ENCODE measurements at regions of chr2 and their contacts with region 1.

Region 1: DNA sequence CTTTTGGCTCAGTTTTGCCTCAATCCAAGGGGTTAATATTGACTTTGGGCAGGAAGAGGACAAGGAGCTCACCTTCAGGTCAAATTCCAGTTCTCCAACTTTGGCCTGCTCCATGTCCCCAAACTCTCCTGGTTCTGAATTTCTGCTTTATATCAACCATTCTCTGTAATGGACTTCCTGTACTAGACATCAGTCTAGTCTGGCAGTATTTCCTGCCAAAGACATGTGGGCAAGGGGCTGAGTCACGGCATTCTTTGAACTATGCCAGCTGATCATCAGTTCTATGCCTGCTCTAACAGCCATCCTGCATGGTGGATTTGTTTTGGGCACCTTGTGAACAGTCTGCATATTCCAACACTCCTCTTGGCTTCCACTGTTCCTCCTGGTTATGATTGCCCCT is 199.4 kb downstream of the ZEB2 start:
- DNase-seq: peak; percentile 28 to 80
- ATAC-seq: peak; percentile 75 to 87 (median 84)
- H3K4me3 ChIP-seq: no peak overlapping the region
- H3K4me3 Mint-ChIP-seq: peak overlapping the region; percentile 52
- H3K27ac ChIP-seq: peak overlapping the region; percentile 32
- H3K27ac Mint-ChIP-seq: peak overlapping the region; percentile 74 to 90
- H3K4me1 ChIP-seq: peaks cover 9% of the 10 kb centered on the region
- H3K4me1 Mint-ChIP-seq: peaks cover 38 to 48% of the 10 kb centered on the region in 2 donors
- H3K27me3 ChIP-seq: no peaks in the 10 kb centered on the region
- H3K27me3 Mint-ChIP-seq: no peaks in the 10 kb centered on the region
- CTCF ChIP-seq: no peak

Region 2: DNA sequence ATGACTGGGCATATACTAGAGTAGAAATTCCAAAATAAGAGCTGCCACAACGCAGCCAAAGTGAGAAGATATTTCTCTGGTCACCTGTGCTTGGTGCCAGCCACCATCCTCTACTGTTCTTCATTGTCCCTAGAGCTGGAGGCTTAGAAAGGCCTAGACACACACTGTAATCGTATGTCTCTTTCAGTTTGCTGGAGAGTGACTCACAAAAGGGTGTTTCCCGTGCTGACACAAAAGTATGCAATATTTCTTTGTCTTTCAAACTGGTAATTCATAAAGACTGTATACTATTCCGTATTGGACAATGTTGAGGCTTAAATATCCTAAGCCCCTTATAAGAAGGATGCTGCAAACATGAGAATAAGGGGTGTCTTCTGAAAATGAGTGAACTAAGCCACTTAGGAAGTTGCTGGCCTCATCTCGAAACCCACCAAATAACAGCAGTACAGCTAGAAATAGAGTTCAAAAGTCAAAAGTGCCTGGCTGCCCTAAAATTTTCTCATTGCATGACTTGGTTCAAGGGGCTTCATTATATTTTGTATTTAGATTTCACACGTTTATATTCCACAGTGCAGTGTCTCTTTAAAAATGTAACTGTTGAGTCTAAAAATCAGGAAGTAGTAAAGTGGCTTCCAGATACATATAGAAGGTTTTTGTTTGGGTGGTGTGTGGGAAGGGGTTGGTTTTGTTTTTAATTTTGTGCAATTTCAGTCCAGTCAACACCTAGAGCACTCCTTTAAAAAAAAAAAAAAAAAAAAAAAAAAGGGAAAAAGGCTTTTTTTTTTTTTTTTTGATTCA is 590.1 kb before region 1 on chr2:
- intact Hi-C with region 1: no loop called
- DNase-seq: peak in 1 of 2 donors; percentile 39
- ATAC-seq: peak; percentile 47 to 78 (median 75)
- H3K4me3 ChIP-seq: no peak overlapping the region
- H3K4me3 Mint-ChIP-seq: no peak overlapping the region
- H3K27ac ChIP-seq: no peak overlapping the region
- H3K27ac Mint-ChIP-seq: peak overlapping the region; percentile 1 to 23
- H3K4me1 ChIP-seq: no peaks in the 10 kb centered on the region
- H3K4me1 Mint-ChIP-seq: peaks cover 38 to 39% of the 10 kb centered on the region in 2 donors
- H3K27me3 ChIP-seq: no peaks in the 10 kb centered on the region
- H3K27me3 Mint-ChIP-seq: no peaks in the 10 kb centered on the region
- CTCF ChIP-seq: no peak

Region 3: DNA sequence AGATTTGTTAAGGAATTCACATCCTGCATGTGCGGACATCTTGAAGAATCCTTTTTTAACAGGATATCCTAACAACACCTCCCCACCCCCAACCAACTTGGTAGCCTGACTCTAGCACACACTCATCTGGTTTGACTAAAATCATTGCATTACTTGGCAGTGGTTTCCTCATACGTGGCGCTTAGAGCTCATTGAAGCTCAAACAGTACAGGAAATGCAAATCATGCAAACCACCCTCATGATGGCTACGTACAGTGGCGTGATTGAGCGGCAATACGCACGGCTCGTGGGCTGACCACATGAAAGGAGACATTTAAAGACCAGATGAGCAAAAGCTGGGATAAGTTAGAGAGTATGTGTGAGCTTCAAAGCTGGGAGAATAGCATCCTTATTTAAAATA is 136.8 kb before region 1 on chr2:
- intact Hi-C with region 1: loop called (anchors 1 kb)
- DNase-seq: peak; percentile 63 to 92
- ATAC-seq: peak; percentile 96 to 97 (median 96)
- H3K4me3 ChIP-seq: peak overlapping the region; percentile 15
- H3K4me3 Mint-ChIP-seq: peak overlapping the region; percentile 86
- H3K27ac ChIP-seq: peak overlapping the region; percentile 61
- H3K27ac Mint-ChIP-seq: peak overlapping the region; percentile 88 to 90
- H3K4me1 ChIP-seq: no peaks in the 10 kb centered on the region
- H3K4me1 Mint-ChIP-seq: peaks cover 24 to 30% of the 10 kb centered on the region in 2 donors
- H3K27me3 ChIP-seq: no peaks in the 10 kb centered on the region
- H3K27me3 Mint-ChIP-seq: no peaks in the 10 kb centered on the region
- CTCF ChIP-seq: no peak

Region 4: DNA sequence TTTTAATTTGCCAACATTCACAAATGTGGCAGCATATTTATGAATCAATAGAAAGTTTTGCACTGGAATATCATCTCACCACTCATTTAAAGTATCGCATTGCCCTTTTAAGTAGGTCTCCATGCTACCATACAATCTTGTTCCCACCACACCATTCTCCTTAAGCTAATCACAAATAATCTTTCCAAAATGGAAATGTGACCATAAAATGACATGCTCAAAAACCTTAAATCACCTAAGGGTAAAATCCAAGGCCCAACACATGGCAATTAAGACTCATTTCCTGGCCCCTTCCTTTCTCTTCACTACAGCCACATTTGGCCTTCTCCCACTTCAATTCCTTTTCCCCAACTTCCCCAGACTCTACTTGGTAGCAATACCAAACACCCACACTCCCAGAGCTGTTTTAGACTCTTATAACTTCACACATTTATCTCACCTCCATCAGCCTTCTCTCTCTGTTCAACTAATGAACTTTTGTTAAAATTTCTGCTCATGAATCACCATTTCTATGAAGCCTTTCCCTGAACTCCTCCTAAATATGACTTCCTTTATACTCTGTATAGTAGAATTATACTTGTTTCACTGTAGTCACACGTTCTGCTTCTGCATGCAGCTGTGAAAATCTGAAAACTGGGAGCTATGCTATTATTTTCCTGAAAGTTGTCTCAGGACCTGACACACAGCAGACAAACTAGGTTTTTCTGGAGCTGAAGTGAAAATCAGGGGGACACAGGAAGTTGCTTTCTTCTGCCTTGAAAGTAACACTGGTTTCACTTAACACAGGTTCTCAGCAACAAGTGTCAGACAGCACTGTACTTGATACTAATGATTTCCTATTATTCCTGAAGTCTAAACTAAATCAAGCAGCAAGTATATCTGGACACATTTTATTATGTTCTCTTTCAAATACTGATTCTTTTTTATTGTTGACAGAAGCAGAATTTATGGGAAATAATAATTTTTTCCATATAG is 104.5 kb before region 1 on chr2:
- intact Hi-C with region 1: loop called (anchors 10 kb)
- DNase-seq: peak in 1 of 2 donors; percentile 48
- ATAC-seq: peak; percentile 67 to 90 (median 88)
- H3K4me3 ChIP-seq: no peak overlapping the region
- H3K4me3 Mint-ChIP-seq: peak overlapping the region; percentile 0
- H3K27ac ChIP-seq: peak overlapping the region; percentile 24
- H3K27ac Mint-ChIP-seq: peak overlapping the region; percentile 73 to 74
- H3K4me1 ChIP-seq: no peaks in the 10 kb centered on the region
- H3K4me1 Mint-ChIP-seq: peaks cover 24 to 36% of the 10 kb centered on the region in 2 donors
- H3K27me3 ChIP-seq: no peaks in the 10 kb centered on the region
- H3K27me3 Mint-ChIP-seq: no peaks in the 10 kb centered on the region
- CTCF ChIP-seq: no peak

Region 5: GRCh38 chr2:144343145-144343544 is 22.7 kb after region 1 on chr2:
- intact Hi-C with region 1: no loop called
- DNase-seq: no peak
- ATAC-seq: no peak
- H3K4me3 ChIP-seq: no peak overlapping the region
- H3K4me3 Mint-ChIP-seq: no peak overlapping the region
- H3K27ac ChIP-seq: no peak overlapping the region
- H3K27ac Mint-ChIP-seq: no peak overlapping the region
- H3K4me1 ChIP-seq: no peaks in the 10 kb centered on the region
- H3K4me1 Mint-ChIP-seq: no peaks in the 10 kb centered on the region
- H3K27me3 ChIP-seq: no peaks in the 10 kb centered on the region
- H3K27me3 Mint-ChIP-seq: no peaks in the 10 kb centered on the region
- CTCF ChIP-seq: no peak

Region 6: DNA sequence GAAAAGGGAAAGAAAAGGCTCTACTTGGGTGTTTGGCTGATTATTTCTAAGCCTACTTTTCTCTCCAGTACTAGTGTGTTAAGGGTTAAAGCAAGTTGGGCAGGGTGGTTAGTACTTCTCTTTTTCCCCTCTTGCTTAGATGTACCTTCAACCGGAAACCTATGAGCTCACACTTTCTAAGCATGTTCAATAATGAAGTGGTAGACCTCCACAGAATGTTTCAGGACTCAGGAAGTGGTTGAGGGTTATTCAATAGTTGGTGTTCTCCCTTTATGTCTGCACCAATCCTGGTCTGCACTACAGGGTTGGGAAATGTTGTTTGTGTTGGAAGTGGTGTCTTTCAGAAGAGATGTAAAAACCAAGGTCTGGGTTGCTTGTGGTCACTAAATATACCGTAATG is 62.4 kb after region 1 on chr2:
- intact Hi-C with region 1: loop called (anchors 2 kb)
- DNase-seq: peak in 1 of 2 donors; percentile 76
- ATAC-seq: peak; percentile 86 to 96 (median 91)
- H3K4me3 ChIP-seq: no peak overlapping the region
- H3K4me3 Mint-ChIP-seq: peak overlapping the region; percentile 36
- H3K27ac ChIP-seq: peak overlapping the region; percentile 2
- H3K27ac Mint-ChIP-seq: peak overlapping the region; percentile 61 to 87
- H3K4me1 ChIP-seq: peaks cover 10% of the 10 kb centered on the region
- H3K4me1 Mint-ChIP-seq: peaks cover 58 to 65% of the 10 kb centered on the region in 2 donors
- H3K27me3 ChIP-seq: no peaks in the 10 kb centered on the region
- H3K27me3 Mint-ChIP-seq: no peaks in the 10 kb centered on the region
- CTCF ChIP-seq: no peak